ENCODE measurements at regions of chr7 and their contacts with region 1.

Region 1: GRCh38 chr7:74656837-74657691 is 454 bp upstream of the GTF2I start:
- DNase-seq: peak; percentile 100
- H3K4me3 Mint-ChIP-seq: peak overlapping the region; percentile 91
- H3K27ac Mint-ChIP-seq: peak overlapping the region; percentile 95
- H3K4me1 Mint-ChIP-seq: peaks cover 45% of the 10 kb centered on the region
- H3K27me3 Mint-ChIP-seq: peaks cover 2% of the 10 kb centered on the region

Region 2: DNA sequence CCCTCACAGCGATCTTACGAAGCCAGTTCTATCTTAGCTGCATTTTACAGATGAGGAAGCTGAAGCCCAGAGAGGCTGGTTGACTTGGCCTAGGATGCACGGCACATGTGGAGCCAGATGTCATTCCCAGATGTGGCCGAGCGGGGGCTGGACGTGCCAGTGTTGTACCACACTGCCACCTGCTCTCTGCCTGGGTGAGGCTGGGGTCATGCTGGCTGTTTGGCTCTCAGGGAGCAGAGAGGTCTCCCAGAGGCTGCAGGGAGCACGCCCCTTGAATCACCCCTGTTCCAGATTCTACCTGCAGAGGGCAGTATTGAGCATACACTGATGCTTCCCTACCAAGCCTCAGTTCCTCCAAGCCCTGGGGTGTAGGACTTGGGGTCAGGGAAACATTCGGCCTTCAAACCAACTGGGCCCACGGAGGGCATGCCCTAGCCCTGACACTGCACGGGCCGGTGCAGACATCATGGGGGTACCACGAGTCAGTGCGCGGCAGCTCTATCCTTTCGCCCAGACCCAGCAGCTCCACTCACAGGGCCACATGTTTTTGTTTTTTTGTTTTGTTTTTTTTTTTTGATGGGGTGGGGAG is 207.2 kb before region 1 on chr7:
- intact Hi-C with region 1: loop called (anchors 2 kb)
- DNase-seq: peak; percentile 91
- H3K4me3 Mint-ChIP-seq: no peak overlapping the region
- H3K27ac Mint-ChIP-seq: no peak overlapping the region
- H3K4me1 Mint-ChIP-seq: peaks cover 13% of the 10 kb centered on the region
- H3K27me3 Mint-ChIP-seq: peaks cover 15% of the 10 kb centered on the region

Region 3: DNA sequence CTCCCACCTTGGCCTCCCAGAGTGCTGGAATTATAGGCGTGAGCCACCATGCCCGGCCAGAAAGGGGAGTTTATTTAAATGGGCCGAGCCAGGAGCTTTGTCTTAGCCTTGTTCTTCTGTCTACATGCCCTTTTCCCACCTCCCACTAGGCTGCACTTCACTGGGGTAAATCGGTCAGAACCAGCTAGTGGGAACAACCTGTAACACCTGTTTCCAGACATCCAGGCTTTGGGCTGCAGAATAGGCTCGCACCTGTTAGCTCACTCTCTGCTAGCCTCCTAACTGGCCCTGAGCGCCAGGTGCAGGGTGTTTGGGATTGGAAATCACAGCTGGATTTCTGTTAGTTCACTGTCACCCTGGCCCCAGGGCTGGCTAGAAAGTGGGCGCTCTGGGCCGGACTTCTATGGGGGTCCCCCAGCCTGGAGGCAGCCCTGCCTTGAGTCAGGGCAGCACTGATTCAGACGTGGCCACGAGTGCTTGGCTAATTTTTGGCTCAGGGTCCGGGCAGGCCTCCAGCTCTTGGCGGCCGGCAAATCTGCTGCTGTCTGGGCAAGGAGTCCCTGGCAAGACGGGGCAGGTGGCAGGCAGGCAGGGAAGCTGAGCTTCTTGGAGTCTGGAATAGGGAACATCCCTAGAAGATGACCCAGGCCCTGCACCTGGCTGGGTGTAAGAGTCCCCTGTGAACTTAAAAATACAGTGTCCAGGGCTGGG is 154.7 kb before region 1 on chr7:
- intact Hi-C with region 1: no loop called
- DNase-seq: no peak
- H3K4me3 Mint-ChIP-seq: no peak overlapping the region
- H3K27ac Mint-ChIP-seq: no peak overlapping the region
- H3K4me1 Mint-ChIP-seq: no peaks in the 10 kb centered on the region
- H3K27me3 Mint-ChIP-seq: no peaks in the 10 kb centered on the region

Region 4: GRCh38 chr7:74617180-74617744 is 39.8 kb before region 1 on chr7:
- intact Hi-C with region 1: loop called (anchors 2 kb)
- DNase-seq: peak; percentile 71
- H3K4me3 Mint-ChIP-seq: peak overlapping the region; percentile 72
- H3K27ac Mint-ChIP-seq: peak overlapping the region; percentile 95
- H3K4me1 Mint-ChIP-seq: peaks cover 15% of the 10 kb centered on the region
- H3K27me3 Mint-ChIP-seq: no peaks in the 10 kb centered on the region

Region 5: GRCh38 chr7:74671602-74672001 is 14.5 kb after region 1 on chr7:
- intact Hi-C with region 1: loop called (anchors 2 kb)
- DNase-seq: no peak
- H3K4me3 Mint-ChIP-seq: no peak overlapping the region
- H3K27ac Mint-ChIP-seq: no peak overlapping the region
- H3K4me1 Mint-ChIP-seq: peaks cover 19% of the 10 kb centered on the region
- H3K27me3 Mint-ChIP-seq: no peaks in the 10 kb centered on the region